Breast epithelium (tissue), 4 donors: ENCODE measurements at regions of chr5 and their contacts with region 1.

Region 1: DNA sequence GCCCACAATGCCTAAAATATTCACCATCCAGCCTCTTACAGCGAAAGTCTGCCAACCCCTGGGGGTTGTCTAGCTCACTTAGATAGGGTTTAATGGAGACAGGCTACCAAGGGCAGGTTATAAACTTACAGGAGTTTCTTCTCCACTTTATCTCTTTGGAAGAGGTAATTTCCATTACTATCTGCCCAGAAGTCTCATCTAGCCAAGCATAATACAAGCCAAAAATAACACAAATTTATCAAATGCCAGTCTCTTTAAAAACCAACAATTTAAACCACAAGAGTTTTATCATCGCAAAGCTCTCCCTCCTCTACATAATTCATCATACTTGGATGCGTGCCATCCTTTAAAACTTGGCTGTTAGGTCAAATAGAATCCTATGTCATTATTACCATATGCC is 6.2 kb downstream of the RBM22 start:
- DNase-seq: no peak
- H3K4me3 ChIP-seq: no peak overlapping the region
- H3K27ac ChIP-seq: no peak overlapping the region
- H3K4me1 ChIP-seq: peaks cover 0 to 4% of the 10 kb centered on the region in 2 donors
- H3K27me3 ChIP-seq: no peaks in the 10 kb centered on the region
- CTCF ChIP-seq: no peak
- POLR2A ChIP-seq: no peak

Region 2: GRCh38 chr5:150253205-150253811 is 441.3 kb before region 1 on chr5:
- intact Hi-C with region 1: loop called (anchors 5 kb)
- DNase-seq: no peak
- H3K4me3 ChIP-seq: no peak overlapping the region
- H3K27ac ChIP-seq: no peak overlapping the region
- H3K4me1 ChIP-seq: no peaks in the 10 kb centered on the region
- H3K27me3 ChIP-seq: no peaks in the 10 kb centered on the region
- CTCF ChIP-seq: no peak
- POLR2A ChIP-seq: no peak

Region 3: GRCh38 chr5:150774145-150774544 is 79.5 kb after region 1 on chr5:
- intact Hi-C with region 1: no loop called
- DNase-seq: no peak
- H3K4me3 ChIP-seq: no peak overlapping the region
- H3K27ac ChIP-seq: no peak overlapping the region
- H3K4me1 ChIP-seq: peaks cover 0 to 6% of the 10 kb centered on the region in 2 donors
- H3K27me3 ChIP-seq: no peaks in the 10 kb centered on the region
- CTCF ChIP-seq: no peak
- POLR2A ChIP-seq: no peak

Region 4: DNA sequence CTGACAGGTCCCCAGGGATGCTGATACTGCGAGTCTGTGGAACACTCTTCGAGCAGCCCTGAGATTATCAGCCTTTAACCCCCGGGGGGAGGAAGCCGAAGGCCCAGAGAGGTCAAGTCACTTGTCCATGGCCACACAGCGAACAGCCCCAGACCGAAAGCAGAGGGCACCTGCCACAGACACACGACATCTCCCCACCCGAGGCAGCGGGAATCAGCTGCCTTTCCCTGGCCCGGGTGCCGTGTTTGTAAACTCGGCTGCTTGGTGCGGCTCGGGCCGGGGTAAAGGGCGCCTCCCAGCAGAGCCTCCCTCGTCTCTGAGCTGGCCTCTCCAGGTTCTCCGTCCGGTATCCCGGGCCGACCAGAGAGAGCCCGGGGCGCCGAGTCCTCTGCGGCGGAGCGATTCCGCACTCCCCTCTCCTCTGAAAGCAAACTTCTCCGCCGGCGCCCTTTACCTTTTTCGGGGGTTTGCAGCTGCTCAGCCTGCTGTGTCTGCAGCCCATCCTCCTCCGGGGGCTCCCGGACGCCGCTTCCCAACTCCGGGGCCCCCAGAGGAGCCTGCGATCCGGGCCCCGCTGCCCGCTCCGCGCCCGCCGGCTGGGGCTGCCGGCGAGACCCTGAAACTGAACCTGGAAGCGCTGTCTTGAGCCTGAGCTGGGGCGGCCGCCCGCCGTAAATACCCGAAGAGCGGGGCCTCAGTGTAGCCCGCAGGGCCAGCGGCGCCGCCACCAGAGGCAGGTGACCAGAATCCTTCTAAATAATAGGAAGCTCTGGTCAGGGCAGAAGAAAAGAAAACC is 529.1 kb after region 1 on chr5 and contains the start of gene CCDC69:
- intact Hi-C with region 1: no loop called
- DNase-seq: peak; percentile 49 to 66
- H3K4me3 ChIP-seq: peak within 1 kb of the TSS; percentile 64 to 91 (median 83)
- H3K27ac ChIP-seq: peak within 1 kb of the TSS; percentile 62 to 74
- H3K4me1 ChIP-seq: peaks cover 0 to 5% of the 10 kb centered on the region in 2 donors
- H3K27me3 ChIP-seq: no peaks in the 10 kb centered on the region
- CTCF ChIP-seq: peak in 1 of 3 donors; percentile 14
- POLR2A ChIP-seq: peak; percentile 69
- total RNA-seq, gene CCDC69: 47.4 to 201 (median 97.0) TPM